A549 (cell line): ENCODE measurements at regions of chr10 and their contacts with region 1.

Region 1: GRCh38 chr10:100670828-100671479 is 74.4 kb upstream of the PAX2 start:
- DNase-seq: peak; percentile 26 to 47
- ATAC-seq: peak; percentile 85 to 94
- H3K4me3 ChIP-seq: peak overlapping the region; percentile 37
- H3K27ac ChIP-seq: peak overlapping the region in 1 of 2 experiments; percentile 43; a peak in 2 of 6 replicates
- H3K4me1 ChIP-seq: no peaks in the 10 kb centered on the region
- CTCF ChIP-seq: peak; percentile 97
- EP300 ChIP-seq: no peak
- POLR2A ChIP-seq: no peak
- RAD21 ChIP-seq: peak; percentile 41 to 74

Region 2: GRCh38 chr10:99620713-99621453 is 1050.1 kb before region 1 on chr10:
- CTCF ChIA-PET with region 1: no interaction called
- POLR2A ChIA-PET with region 1: no interaction called
- DNase-seq: peak; percentile 84 to 96
- ATAC-seq: peak; percentile 89 to 96
- H3K4me3 ChIP-seq: peak overlapping the region; percentile 55
- H3K27ac ChIP-seq: peak overlapping the region; percentile 95
- H3K4me1 ChIP-seq: peaks cover 27% of the 10 kb centered on the region
- CTCF ChIP-seq: no peak
- EP300 ChIP-seq: no peak
- POLR2A ChIP-seq: peak; percentile 85
- RAD21 ChIP-seq: no peak; a peak in 1 of 5 replicates

Region 3: DNA sequence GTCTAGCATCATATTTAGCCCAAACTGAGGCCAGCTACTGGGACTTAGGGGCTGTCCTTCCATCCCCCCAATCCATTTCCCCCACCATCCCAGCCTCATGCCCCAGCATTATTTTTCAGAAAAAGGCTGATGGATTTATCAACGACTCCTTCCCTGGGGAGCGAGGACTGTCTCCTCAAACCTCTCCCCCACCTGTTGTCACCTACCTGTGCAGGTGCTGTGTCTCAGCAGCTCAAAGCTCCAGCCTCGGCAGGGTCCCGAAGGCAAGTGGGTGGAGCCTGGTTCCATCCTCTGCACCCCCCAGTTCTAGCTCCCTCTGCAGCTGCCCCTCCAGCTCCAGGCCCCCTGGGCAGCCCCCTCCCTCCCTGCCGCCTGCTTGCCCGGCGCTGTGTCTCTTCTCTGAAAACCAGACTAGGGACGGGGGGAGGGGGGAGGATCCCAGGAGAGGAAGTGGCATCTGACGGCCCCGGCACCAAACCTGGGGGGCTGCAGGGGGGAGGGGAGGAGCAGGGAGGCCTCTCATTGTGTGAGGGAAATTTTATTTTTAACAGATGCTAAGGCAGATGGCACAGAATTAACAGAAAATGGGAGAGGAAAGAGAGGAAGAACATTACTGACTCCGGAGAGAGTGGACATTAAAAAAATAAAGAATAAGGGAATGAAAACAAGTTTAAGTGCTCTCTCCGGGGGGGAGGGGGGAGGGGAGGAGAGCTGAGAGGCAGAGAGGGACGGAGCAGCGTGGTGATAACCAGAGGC is 12.8 kb after region 1 on chr10:
- CTCF ChIA-PET with region 1: interaction called, 18 read pairs
- POLR2A ChIA-PET with region 1: no interaction called
- DNase-seq: no peak
- ATAC-seq: no peak
- H3K4me3 ChIP-seq: no peak overlapping the region
- H3K27ac ChIP-seq: no peak overlapping the region
- H3K4me1 ChIP-seq: peaks cover 4% of the 10 kb centered on the region; the same call in 1 of the 3 replicates
- CTCF ChIP-seq: no peak
- EP300 ChIP-seq: no peak
- POLR2A ChIP-seq: no peak
- RAD21 ChIP-seq: no peak

Region 4: GRCh38 chr10:100710151-100710871 is 39.4 kb after region 1 on chr10:
- CTCF ChIA-PET with region 1: interaction called, 11 read pairs
- POLR2A ChIA-PET with region 1: no interaction called
- DNase-seq: peak in 1 of 2 experiments; percentile 41
- ATAC-seq: peak; percentile 65 to 80; a peak in 4 of 6 replicates
- H3K4me3 ChIP-seq: peak overlapping the region; percentile 47
- H3K27ac ChIP-seq: peak overlapping the region; percentile 39 to 79; a peak in 5 of 6 replicates
- H3K4me1 ChIP-seq: 0 out of 3 replicates have a peak, but pooled peaks cover 4% of the 10 kb centered on the region
- CTCF ChIP-seq: no peak
- EP300 ChIP-seq: no peak
- POLR2A ChIP-seq: no peak
- RAD21 ChIP-seq: no peak

Region 5: DNA sequence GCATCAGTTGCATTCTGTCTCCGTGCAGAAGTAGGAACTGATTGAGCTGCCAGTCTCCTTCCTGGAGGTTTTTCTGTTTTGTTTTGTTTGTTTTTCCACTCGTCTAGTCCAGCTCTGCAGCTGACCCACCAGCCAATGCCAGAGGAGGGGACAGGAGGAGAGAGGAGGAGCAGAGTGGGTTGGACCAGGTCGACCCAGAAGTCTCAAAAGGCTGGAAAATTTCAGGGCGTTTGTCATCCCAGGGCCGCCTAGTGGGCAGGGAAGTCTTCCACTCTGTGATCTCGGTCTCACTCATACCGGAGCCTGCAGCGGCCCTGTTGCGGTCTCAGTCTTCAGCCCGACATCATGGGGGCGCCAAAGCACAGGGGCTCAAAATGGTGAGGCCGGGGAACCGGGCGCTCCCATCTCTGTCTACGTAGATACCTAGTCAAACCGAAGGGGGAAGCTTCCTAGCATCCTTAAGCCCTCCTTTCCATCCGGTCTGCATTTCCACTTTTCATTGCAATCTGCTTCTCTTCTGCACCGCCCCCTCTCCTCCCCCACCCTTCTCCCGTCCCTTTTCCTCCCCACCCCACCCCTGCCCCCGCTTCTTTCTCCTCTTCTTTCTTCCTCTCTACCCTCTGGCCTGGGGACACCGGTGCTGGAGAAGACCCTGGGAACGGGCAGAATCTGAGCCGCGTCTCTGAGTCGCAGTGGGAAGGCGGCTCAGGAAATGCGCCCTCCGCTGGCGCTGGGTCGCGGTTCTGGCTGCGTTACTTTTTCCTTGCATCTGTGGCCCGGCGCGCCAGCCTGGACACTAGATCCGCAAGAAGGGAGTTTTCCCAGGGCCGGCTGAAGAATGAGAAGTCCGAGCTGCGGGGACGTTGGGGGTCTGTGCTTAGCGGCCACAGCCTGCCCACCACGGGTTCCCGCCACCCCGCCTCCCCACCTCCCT is 58.2 kb after region 1 on chr10:
- CTCF ChIA-PET with region 1: interaction called, 23 read pairs
- POLR2A ChIA-PET with region 1: no interaction called
- DNase-seq: peak; percentile 90 to 93
- ATAC-seq: peak; percentile 79 to 88
- H3K4me3 ChIP-seq: peak overlapping the region; percentile 46
- H3K27ac ChIP-seq: peak overlapping the region; percentile 80 to 93
- H3K4me1 ChIP-seq: peaks cover 21% of the 10 kb centered on the region
- CTCF ChIP-seq: peak; percentile 85
- EP300 ChIP-seq: no peak
- POLR2A ChIP-seq: peak; percentile 52
- RAD21 ChIP-seq: peak; percentile 62 to 73

Region 6: GRCh38 chr10:100872034-100872791 is 201.3 kb after region 1 on chr10:
- CTCF ChIA-PET with region 1: interaction called, 36 read pairs
- POLR2A ChIA-PET with region 1: no interaction called
- DNase-seq: peak; percentile 63 to 92
- ATAC-seq: peak; percentile 76 to 94; a peak in 5 of 6 replicates
- H3K4me3 ChIP-seq: no peak overlapping the region
- H3K27ac ChIP-seq: 0 out of 6 replicates have a peak overlapping the region, but pooled peaks of 1 of the 2 experiments have one; percentile 20
- H3K4me1 ChIP-seq: peaks cover 17% of the 10 kb centered on the region; the same call in 2 of the 3 replicates
- CTCF ChIP-seq: peak; percentile 75
- EP300 ChIP-seq: no peak
- POLR2A ChIP-seq: no peak
- RAD21 ChIP-seq: peak; percentile 72 to 82